Activated CD4-positive, alpha-beta T cell treated with anti-CD3 and anti-CD28 coated beads, Interleukin-2, amount 10 ng/mL, durations not matched to agents 7 days and 5 days (primary cell): ENCODE measurements at regions of chr17 and their contacts with region 1.

Region 1: DNA sequence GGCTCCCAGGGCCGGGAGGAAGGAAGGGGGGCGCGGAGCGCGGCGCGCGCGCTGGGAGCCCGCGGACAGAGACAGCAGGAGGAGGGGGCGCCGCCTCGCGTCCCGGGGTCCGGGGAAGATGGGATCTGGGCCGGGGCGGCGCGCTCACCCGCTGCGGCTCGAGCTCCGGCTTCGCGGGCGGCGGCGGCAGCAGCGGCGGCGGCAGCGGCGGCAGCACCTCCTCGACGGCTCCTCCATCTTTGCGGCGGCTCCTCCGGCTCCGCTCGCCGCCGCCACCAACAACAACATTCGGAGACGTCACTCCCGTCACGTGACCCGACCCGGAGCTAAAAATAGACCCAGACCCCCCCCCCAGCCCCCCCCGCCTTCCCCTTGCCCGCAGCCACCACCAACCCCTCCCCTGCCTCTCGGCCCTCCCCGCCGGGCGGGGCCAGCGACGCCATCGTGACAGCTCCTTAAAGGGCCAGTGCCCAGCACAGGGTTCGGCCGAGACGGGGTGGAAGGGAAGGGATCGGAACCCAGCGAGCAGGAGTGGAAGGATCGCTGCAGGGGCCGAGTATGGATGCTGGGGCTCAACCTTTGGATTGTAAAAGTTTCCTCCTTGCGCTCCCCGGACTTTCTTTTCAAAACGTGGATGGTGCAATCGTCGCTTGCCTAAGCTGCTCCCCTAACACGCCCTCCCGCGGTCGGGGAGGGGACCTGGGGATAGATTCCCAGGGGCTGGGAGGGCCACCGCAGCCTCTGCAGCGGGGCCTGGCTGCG is at the start of gene HDAC5:
- DNase-seq: peak; percentile 96
- H3K4me3 Mint-ChIP-seq: peak within 1 kb of the TSS; percentile 94
- H3K27ac Mint-ChIP-seq: peak within 1 kb of the TSS; percentile 98
- H3K4me1 Mint-ChIP-seq: peaks cover 24% of the 10 kb centered on the region
- H3K27me3 Mint-ChIP-seq: peaks cover 3% of the 10 kb centered on the region
- total RNA-seq, gene HDAC5: 27.0 to 32.3 TPM

Region 2: GRCh38 chr17:44110823-44111633 is 12.5 kb before region 1 on chr17:
- CTCF ChIA-PET with region 1: interaction called, 14 read pairs
- POLR2A ChIA-PET with region 1: no interaction called
- DNase-seq: peak; percentile 65
- H3K4me3 Mint-ChIP-seq: peak overlapping the region; percentile 30
- H3K27ac Mint-ChIP-seq: no peak overlapping the region
- H3K4me1 Mint-ChIP-seq: peaks cover 22% of the 10 kb centered on the region
- H3K27me3 Mint-ChIP-seq: no peaks in the 10 kb centered on the region